Sigmoid colon (tissue), 7 donors: ENCODE measurements at regions of chr7 and their contacts with region 1.

Region 1: GRCh38 chr7:45259966-45260646 is 102.5 kb downstream of the RAMP3 start:
- DNase-seq: no peak
- H3K4me3 ChIP-seq: no peak overlapping the region
- H3K27ac ChIP-seq: no peak overlapping the region
- H3K4me1 ChIP-seq: no peaks in the 10 kb centered on the region
- H3K27me3 ChIP-seq: peaks cover 0 to 13% (median 5%) of the 10 kb centered on the region in 3 donors
- CTCF ChIP-seq: peak; percentile 66 to 96 (median 88)
- EP300 ChIP-seq: no peak
- POLR2A ChIP-seq: no peak

Region 2: DNA sequence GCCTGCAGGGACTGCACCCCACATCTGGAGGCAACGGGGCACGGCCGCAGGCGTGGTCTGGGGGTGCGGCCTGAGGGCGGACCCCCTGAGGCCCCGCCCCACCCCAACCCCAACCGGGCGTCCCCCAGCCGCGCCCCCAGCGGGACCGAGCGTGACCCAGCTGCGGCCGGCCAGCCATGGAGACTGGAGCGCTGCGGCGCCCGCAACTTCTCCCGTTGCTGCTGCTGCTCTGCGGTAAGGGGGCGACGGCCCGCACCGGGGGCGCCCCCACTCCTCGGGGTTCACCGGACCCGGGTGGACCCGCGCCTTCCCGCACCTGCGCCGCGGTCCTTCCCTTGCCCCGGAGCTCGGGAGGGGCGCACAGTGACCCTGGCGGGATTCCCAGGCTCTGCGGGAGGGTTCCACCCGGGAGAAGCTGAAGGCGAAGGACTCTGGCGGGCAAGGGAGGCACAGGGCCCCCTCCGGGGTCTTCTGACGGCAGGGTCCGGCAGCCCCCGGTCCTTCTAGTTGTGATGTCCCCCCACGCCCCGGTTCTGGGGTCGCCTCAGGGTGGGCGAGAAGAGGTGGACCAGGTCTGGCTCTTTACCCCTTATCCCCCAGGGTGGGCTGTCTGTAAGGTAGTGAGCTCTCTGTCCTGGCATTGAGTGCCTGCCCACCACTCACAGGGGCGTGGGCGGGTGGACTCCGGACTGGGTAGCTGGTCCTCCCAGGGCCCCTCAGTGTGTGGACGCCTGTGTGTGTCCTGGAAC is 102.3 kb before region 1 on chr7 and contains the start of gene RAMP3:
- intact Hi-C with region 1: loop called (anchors 1 kb)
- DNase-seq: peak; percentile 55
- H3K4me3 ChIP-seq: peak within 1 kb of the TSS; percentile 1 to 40 (median 34)
- H3K27ac ChIP-seq: peak within 1 kb of the TSS; percentile 22 to 57 (median 38)
- H3K4me1 ChIP-seq: peaks cover 0 to 10% (median 7%) of the 10 kb centered on the region in 4 donors
- H3K27me3 ChIP-seq: peaks cover 8 to 34% (median 18%) of the 10 kb centered on the region in 3 donors
- CTCF ChIP-seq: no peak
- EP300 ChIP-seq: no peak
- POLR2A ChIP-seq: no peak
- total RNA-seq, gene RAMP3: 18.4 to 57.8 (median 33.7) TPM

Region 3: DNA sequence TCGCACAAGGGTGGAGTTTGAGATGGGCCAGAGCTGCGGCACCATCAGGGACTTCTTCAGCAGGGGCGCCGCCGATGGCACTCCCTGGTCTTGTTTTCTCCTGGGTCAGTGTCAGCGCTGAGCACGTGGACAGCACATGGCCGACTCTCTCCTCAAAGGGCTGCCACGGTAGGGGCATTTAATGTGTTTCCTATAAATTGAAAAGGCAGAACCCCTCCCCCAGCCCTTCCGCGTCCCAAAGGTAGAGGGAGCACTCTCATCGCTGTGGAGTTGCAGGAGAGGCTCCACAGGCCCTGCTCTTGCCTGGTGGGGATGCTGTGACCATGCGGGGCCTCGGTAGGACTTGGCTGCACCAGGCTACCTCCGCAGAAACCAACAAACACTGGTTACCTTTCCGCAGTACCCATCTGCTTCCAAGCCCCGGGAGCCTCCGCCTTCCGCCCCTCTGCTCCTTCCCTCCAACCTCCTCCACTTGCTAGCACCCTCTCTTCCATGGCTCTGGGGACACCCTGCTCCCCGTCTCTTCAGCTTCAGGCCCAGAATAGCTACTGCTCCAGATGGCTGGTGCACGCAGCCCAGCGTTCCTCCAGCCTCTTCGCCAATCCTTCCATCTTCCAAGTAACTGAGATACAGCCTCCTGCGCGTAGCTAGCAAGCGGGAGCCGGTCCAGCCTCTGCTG is 147.8 kb after region 1 on chr7:
- intact Hi-C with region 1: no loop called
- DNase-seq: no peak
- H3K4me3 ChIP-seq: no peak overlapping the region
- H3K27ac ChIP-seq: no peak overlapping the region
- H3K4me1 ChIP-seq: no peaks in the 10 kb centered on the region
- H3K27me3 ChIP-seq: peaks cover 0 to 2% (median 0%) of the 10 kb centered on the region in 3 donors
- CTCF ChIP-seq: no peak
- EP300 ChIP-seq: no peak
- POLR2A ChIP-seq: no peak

Region 4: DNA sequence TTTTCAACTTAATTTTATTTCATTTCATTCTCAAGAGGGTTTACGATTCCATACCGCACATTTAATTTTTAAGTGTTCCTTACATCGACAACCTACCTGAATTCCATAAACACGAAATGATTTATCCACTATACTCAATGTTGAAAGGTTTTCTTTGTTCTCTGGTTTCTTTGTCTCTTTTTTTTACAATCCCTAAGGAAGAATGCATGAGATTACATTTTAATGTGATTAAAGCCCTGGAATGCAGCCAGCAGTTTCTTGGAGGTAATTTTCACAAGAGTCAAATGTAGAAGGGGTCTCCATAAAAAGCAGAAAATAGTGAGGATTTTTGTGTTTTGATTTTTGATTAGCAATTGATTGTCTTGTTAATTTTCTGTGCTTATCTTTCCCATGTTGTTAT is 254.8 kb after region 1 on chr7:
- intact Hi-C with region 1: no loop called
- DNase-seq: no peak
- H3K4me3 ChIP-seq: no peak overlapping the region
- H3K27ac ChIP-seq: no peak overlapping the region
- H3K4me1 ChIP-seq: no peaks in the 10 kb centered on the region
- H3K27me3 ChIP-seq: no peaks in the 10 kb centered on the region
- CTCF ChIP-seq: no peak
- EP300 ChIP-seq: no peak
- POLR2A ChIP-seq: no peak